ENCODE measurements at regions of chr15 and their contacts with region 1.

Region 1: DNA sequence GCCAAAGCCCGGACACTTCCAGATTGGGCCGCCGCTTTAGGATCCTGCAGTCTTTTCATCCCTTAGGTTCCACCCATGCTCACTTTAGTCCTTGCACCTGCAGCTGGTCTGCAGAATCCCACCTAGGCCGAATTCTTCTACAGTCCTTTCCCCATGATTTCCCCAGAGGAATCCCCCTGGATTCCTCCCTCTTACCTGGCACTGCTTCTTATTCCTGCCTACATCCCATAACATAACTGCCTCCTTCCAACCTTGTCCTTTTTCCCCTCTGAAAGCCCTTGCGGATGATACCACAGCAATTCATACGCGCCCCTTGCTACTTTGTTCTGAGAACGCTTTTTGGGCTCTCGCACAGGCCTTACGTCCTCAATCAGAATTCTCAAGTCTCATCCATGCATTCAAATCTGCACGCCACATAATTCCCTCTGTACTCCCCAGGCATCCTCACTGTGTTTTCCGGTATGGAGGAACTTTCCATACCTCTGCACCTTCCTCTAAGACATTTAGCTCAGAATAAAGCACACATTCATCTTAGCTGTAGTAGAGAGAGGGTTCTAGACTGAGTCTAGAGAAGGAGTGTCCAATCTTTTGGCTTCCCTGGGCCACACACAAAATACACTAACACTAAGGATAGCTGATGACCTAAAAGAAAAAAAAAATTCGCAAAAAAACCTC is 619 bp downstream of the EIF2AK4 start:
- DNase-seq: no peak
- ATAC-seq: peak; percentile 3

Region 2: GRCh38 chr15:39782441-39783138 is 151.9 kb before region 1 on chr15 and contains the start of gene FSIP1:
- intact Hi-C with region 1: loop called (anchors 10 kb)
- DNase-seq: peak; percentile 98
- ATAC-seq: peak; percentile 99
- total RNA-seq, gene FSIP1: 0.91 TPM

Measured in Right ventricle myocardium superior (tissue), 1 donor.